Activated naive CD4-positive, alpha-beta T cell treated with anti-CD3 and anti-CD28 coated beads, Interleukin-2, amount 10 ng/mL, durations not matched to agents 7 days and 5 days (primary cell): ENCODE measurements at regions of chr2 and their contacts with region 1.

Region 1: GRCh38 chr2:197191177-197191939 is 119.2 kb downstream of the ANKRD44 start:
- DNase-seq: no peak
- H3K4me3 Mint-ChIP-seq: no peak overlapping the region
- H3K27ac Mint-ChIP-seq: peak overlapping the region; percentile 7
- H3K4me1 Mint-ChIP-seq: peaks cover 77% of the 10 kb centered on the region
- H3K27me3 Mint-ChIP-seq: no peaks in the 10 kb centered on the region

Region 2: GRCh38 chr2:197168705-197169104 is 22.7 kb before region 1 on chr2:
- CTCF ChIA-PET with region 1: interaction called, 15 read pairs
- DNase-seq: peak; percentile 77
- H3K4me3 Mint-ChIP-seq: no peak overlapping the region
- H3K27ac Mint-ChIP-seq: no peak overlapping the region
- H3K4me1 Mint-ChIP-seq: peaks cover 37% of the 10 kb centered on the region
- H3K27me3 Mint-ChIP-seq: no peaks in the 10 kb centered on the region

Region 3: GRCh38 chr2:197209742-197210408 is 18.5 kb after region 1 on chr2:
- CTCF ChIA-PET with region 1: interaction called, 12 read pairs
- DNase-seq: peak; percentile 58
- H3K4me3 Mint-ChIP-seq: peak overlapping the region; percentile 44
- H3K27ac Mint-ChIP-seq: peak overlapping the region; percentile 97
- H3K4me1 Mint-ChIP-seq: peaks cover 98% of the 10 kb centered on the region
- H3K27me3 Mint-ChIP-seq: no peaks in the 10 kb centered on the region

Region 4: GRCh38 chr2:197304556-197305011 is 113.2 kb after region 1 on chr2:
- CTCF ChIA-PET with region 1: interaction called, 54 read pairs
- DNase-seq: no peak
- H3K4me3 Mint-ChIP-seq: peak overlapping the region; percentile 95
- H3K27ac Mint-ChIP-seq: peak overlapping the region; percentile 93
- H3K4me1 Mint-ChIP-seq: peaks cover 82% of the 10 kb centered on the region
- H3K27me3 Mint-ChIP-seq: no peaks in the 10 kb centered on the region

Region 5: GRCh38 chr2:197310271-197310985 is 119.1 kb after region 1 on chr2 and contains the start of gene ANKRD44:
- CTCF ChIA-PET with region 1: interaction called, 54 read pairs
- DNase-seq: peak; percentile 91
- H3K4me3 Mint-ChIP-seq: peak within 1 kb of the TSS; percentile 95
- H3K27ac Mint-ChIP-seq: peak within 1 kb of the TSS; percentile 93
- H3K4me1 Mint-ChIP-seq: peaks cover 57% of the 10 kb centered on the region
- H3K27me3 Mint-ChIP-seq: no peaks in the 10 kb centered on the region